Sigmoid colon (tissue), 7 donors: ENCODE measurements at regions of chr2 and their contacts with region 1.

Region 1: GRCh38 chr2:156342254-156343095 is 10.0 kb upstream of the NR4A2 start:
- DNase-seq: peak; percentile 99
- H3K4me3 ChIP-seq: peak overlapping the region; percentile 78 to 99 (median 93)
- H3K27ac ChIP-seq: peak overlapping the region; percentile 97 to 100 (median 100)
- H3K4me1 ChIP-seq: peaks cover 0 to 12% (median 11%) of the 10 kb centered on the region in 4 donors
- H3K27me3 ChIP-seq: no peaks in the 10 kb centered on the region
- CTCF ChIP-seq: no peak
- EP300 ChIP-seq: peak; percentile 68 to 89 (median 81)
- POLR2A ChIP-seq: peak; percentile 51 to 75

Region 2: GRCh38 chr2:156400706-156401678 is 58.5 kb after region 1 on chr2:
- intact Hi-C with region 1: loop called (anchors 1 kb)
- DNase-seq: peak; percentile 89
- H3K4me3 ChIP-seq: peak overlapping the region; percentile 60 to 73 (median 64)
- H3K27ac ChIP-seq: peak overlapping the region; percentile 89 to 94 (median 90)
- H3K4me1 ChIP-seq: peaks cover 3 to 8% (median 5%) of the 10 kb centered on the region in 4 donors
- H3K27me3 ChIP-seq: no peaks in the 10 kb centered on the region
- CTCF ChIP-seq: no peak
- EP300 ChIP-seq: no peak
- POLR2A ChIP-seq: no peak